Activated CD8-positive, alpha-beta T cell treated with anti-CD3 and anti-CD28 coated beads, Interleukin-2, amount 10 ng/mL, durations not matched to agents 7 days and 5 days (primary cell): ENCODE measurements at regions of chr15 and their contacts with region 1.

Region 1: GRCh38 chr15:82999905-83000671 is 11.4 kb downstream of the C15orf40 start:
- DNase-seq: peak; percentile 63
- ATAC-seq: peak; percentile 93
- H3K4me3 Mint-ChIP-seq: peak overlapping the region; percentile 64
- H3K27ac Mint-ChIP-seq: peak overlapping the region; percentile 77
- H3K4me1 Mint-ChIP-seq: peaks cover 8% of the 10 kb centered on the region
- H3K27me3 Mint-ChIP-seq: no peaks in the 10 kb centered on the region

Region 2: GRCh38 chr15:82530606-82531379 is 469.3 kb before region 1 on chr15:
- CTCF ChIA-PET with region 1: interaction called, 11 read pairs
- POLR2A ChIA-PET with region 1: no interaction called
- DNase-seq: peak; percentile 83
- ATAC-seq: peak; percentile 84
- H3K4me3 Mint-ChIP-seq: peak overlapping the region; percentile 29
- H3K27ac Mint-ChIP-seq: peak overlapping the region; percentile 5
- H3K4me1 Mint-ChIP-seq: peaks cover 14% of the 10 kb centered on the region
- H3K27me3 Mint-ChIP-seq: peaks cover 5% of the 10 kb centered on the region

Region 3: DNA sequence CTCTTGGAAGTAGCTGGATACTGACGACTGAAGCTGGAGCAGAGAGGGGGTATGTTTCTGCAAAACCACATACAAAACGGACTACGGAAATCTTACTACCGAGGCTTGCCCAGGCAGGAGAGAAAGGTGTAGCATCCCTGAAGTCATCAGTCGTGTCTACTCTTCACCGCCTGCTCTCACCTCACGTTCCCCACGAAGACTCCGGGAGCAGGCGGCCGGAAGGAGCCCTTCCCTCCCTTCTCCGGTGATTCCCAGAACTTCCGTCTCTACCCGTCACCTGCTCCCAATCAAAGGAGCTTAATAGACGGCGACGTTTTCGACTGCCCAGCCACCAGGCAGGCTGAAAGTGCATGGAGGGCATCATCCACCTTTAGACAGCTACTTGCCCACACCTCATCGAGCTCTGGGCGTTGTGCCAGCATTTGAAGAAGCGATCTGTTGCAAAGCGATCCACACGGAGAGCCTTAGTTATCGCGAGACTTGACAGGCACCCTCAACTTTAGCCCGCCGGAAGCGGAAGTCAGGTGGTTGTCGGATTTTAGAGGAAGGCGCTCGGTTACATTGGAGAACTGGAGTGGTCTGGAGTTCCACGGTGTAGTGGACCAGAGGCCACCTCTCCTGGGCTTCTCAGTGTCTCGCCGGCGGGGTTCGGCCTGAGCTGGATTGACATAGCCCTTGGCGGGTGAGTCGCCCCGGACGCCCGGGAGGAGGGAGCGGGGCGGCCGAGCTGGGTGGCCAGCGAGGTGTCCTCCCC is 14.2 kb before region 1 on chr15 and contains the start of gene RAMAC:
- CTCF ChIA-PET with region 1: interaction called, 28 read pairs
- POLR2A ChIA-PET with region 1: interaction called, 5 read pairs
- DNase-seq: peak; percentile 95
- ATAC-seq: peak; percentile 93
- H3K4me3 Mint-ChIP-seq: peak within 1 kb of the TSS; percentile 98
- H3K27ac Mint-ChIP-seq: peak within 1 kb of the TSS; percentile 97
- H3K4me1 Mint-ChIP-seq: peaks cover 36% of the 10 kb centered on the region
- H3K27me3 Mint-ChIP-seq: no peaks in the 10 kb centered on the region
- total RNA-seq, gene RAMAC: 25.8 to 27.0 TPM